CD8-positive, alpha-beta T cell (primary cell): ENCODE measurements at regions of chr7 and their contacts with region 1.

Region 1: DNA sequence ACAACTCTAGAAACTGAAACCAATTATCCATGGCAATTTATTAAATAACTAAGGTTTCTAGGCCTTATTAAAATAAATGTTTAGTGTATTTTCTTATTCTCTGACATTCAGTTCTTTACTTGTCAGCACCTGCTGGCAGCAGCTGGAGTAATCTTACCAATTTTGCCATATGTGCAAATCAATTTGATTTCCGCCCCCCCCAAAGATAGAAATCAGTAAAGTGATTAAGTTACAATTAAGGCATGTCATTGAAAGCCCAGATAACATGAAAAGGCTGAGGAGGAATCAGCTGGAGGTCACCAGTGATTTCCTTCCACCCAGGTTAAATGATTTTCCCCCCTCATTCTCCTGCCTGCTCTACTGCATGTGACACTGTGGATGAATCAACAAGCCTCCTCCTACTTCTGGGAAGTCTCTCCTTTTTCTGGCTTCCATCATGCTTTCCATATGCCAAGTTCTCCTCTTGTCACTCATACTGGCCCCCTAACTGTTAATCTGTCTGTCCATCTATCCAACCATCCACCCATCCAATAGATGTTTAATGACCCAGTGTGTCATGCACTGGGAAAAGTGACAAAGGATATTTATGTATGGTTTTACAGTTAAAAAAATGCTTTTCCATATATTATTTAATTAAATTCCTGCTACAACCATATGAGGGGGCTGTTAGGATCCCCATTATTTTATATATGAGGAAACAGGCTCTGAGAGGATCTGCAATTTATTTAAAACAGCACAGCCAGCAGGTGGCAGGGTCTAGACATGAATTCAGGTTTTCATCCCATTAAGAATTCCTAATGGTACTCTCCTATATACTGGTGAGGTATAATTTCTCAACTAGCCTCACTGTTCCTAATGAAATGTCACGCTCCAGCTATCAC is 116.5 kb downstream of the ATXN7L1 start:
- DNase-seq: peak in 4 of 9 experiments; percentile 23 to 59 (median 39)
- ATAC-seq: peak; percentile 25
- H3K4me3 ChIP-seq: no peak overlapping the region
- H3K4me3 Mint-ChIP-seq: no peak overlapping the region
- H3K27ac ChIP-seq: no peak overlapping the region
- H3K27ac Mint-ChIP-seq: peak overlapping the region; percentile 70
- H3K4me1 ChIP-seq: peaks cover 30% of the 10 kb centered on the region
- H3K4me1 Mint-ChIP-seq: peaks cover 43% of the 10 kb centered on the region
- H3K27me3 ChIP-seq: no peaks in the 10 kb centered on the region
- H3K27me3 Mint-ChIP-seq: no peaks in the 10 kb centered on the region
- CTCF ChIP-seq: peak; percentile 30

Region 2: DNA sequence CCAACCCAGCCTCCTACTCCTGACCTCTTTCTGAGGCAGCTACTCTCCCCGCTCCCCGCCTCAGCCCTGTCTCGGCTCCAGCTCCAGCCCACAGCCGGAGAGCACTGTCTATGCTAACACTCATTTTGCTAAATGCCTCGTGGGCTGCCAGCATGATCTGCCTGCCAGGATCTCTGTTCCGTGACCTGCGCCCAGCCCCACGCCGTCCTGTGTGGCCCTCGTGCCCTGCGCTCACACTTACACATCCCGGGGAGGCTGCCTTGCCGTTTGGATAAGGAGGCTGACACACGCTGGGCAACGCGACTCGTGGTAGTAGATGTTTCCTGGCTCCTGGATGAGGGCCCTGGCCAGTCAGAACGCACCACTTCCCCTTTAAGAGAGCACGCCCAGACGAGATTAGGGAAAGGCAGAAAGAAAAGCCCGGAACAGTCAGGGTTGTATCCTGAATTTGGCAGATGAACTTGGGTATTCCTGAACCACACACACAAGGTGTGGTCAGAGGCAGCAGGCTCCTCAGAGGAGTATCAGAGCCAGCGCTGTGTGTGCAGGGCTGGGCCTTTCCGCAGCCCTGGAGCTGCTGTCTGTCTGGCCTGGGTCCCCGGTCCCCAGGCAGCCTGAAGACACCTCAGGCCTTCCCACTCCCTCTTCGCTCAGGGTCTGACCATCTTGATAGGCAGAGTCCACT is 81.0 kb before region 1 on chr7:
- CTCF ChIA-PET with region 1: interaction called, 14 read pairs
- POLR2A ChIA-PET with region 1: interaction called, 3 read pairs
- intact Hi-C with region 1: loop called in 1 of 2 experiments (anchors 5 kb)
- DNase-seq: peak in 1 of 9 experiments; percentile 26
- ATAC-seq: no peak
- H3K4me3 ChIP-seq: no peak overlapping the region
- H3K4me3 Mint-ChIP-seq: peak overlapping the region; percentile 33
- H3K27ac ChIP-seq: peak overlapping the region in 1 of 2 experiments; percentile 80
- H3K27ac Mint-ChIP-seq: peak overlapping the region; percentile 84
- H3K4me1 ChIP-seq: peaks cover 39% of the 10 kb centered on the region
- H3K4me1 Mint-ChIP-seq: peaks cover 70% of the 10 kb centered on the region
- H3K27me3 ChIP-seq: no peaks in the 10 kb centered on the region
- H3K27me3 Mint-ChIP-seq: no peaks in the 10 kb centered on the region
- CTCF ChIP-seq: no peak

Region 3: DNA sequence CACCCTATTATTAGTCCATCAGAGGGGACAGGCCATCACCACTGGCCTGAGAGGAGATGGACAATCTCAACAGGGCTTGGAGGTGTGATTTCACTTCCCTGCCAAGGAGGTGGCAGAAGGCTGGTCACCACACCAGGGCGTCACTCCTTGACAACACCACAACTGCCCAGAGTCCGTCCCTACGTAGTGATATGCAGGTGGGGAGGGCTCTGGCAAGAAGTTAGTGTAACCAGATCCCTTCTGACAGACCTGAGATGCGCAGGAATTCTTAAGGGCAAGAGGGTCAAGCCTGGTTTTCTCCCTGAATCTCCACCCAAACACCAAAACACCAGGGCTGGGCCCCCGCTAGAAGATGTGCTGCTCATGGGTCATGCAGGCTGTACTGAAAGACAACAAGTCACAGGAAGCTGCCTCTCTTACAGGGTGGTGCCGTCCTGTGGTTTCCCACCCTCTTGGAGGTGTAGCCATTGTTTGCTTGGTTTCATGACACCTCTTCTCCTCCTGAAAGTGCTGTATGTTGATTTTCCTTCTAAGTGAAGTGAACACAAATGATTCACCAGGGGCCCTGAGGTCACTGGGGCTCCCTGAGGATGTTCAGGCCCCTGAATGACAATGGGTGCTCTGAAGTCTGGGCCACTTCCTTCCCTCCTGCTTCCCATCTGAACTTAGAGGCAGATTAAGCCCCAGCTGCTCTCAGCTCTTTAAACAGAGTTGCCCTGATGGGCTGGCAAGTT is 89.4 kb after region 1 on chr7:
- CTCF ChIA-PET with region 1: interaction called, 22 read pairs
- POLR2A ChIA-PET with region 1: interaction called, 9 read pairs
- intact Hi-C with region 1: loop called in 1 of 2 experiments (anchors 1 kb)
- DNase-seq: peak; percentile 30 to 91 (median 71)
- ATAC-seq: peak; percentile 86
- H3K4me3 ChIP-seq: peak overlapping the region in 1 of 2 experiments; percentile 18
- H3K4me3 Mint-ChIP-seq: peak overlapping the region; percentile 52
- H3K27ac ChIP-seq: peak overlapping the region; percentile 44 to 72
- H3K27ac Mint-ChIP-seq: peak overlapping the region; percentile 90
- H3K4me1 ChIP-seq: peaks cover 52% of the 10 kb centered on the region
- H3K4me1 Mint-ChIP-seq: peaks cover 74% of the 10 kb centered on the region
- H3K27me3 ChIP-seq: no peaks in the 10 kb centered on the region
- H3K27me3 Mint-ChIP-seq: no peaks in the 10 kb centered on the region
- CTCF ChIP-seq: no peak

Region 4: DNA sequence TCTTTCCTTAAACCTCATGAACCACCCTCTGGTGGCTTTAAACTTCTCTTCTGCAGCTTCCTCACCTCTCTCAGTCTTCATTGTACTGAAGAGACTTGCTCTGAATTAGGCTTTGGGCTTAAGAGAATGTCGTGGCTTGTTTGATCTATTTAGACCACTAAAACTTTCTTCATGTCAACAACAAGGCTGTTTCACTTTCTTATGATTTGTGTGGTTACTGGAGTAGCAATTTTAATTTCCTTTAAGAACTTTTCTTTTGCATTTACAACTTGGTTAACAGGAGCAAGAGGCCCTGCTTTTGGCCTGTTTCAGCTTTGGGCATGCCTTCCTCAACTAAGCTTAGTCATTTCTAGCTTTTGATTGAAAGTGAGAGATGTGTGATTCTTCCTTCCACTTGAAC is 165.0 kb after region 1 on chr7:
- CTCF ChIA-PET with region 1: interaction called, 14 read pairs
- POLR2A ChIA-PET with region 1: interaction called, 4 read pairs
- intact Hi-C with region 1: no loop called
- DNase-seq: peak in 3 of 9 experiments; percentile 16 to 73 (median 51)
- ATAC-seq: peak; percentile 86
- H3K4me3 ChIP-seq: no peak overlapping the region
- H3K4me3 Mint-ChIP-seq: peak overlapping the region; percentile 38
- H3K27ac ChIP-seq: peak overlapping the region in 1 of 2 experiments; percentile 40
- H3K27ac Mint-ChIP-seq: peak overlapping the region; percentile 78
- H3K4me1 ChIP-seq: peaks cover 21% of the 10 kb centered on the region
- H3K4me1 Mint-ChIP-seq: peaks cover 35% of the 10 kb centered on the region
- H3K27me3 ChIP-seq: no peaks in the 10 kb centered on the region
- H3K27me3 Mint-ChIP-seq: no peaks in the 10 kb centered on the region
- CTCF ChIP-seq: no peak

Region 5: GRCh38 chr7:106022193-106022821 is 262.4 kb after region 1 on chr7:
- CTCF ChIA-PET with region 1: interaction called, 11 read pairs
- POLR2A ChIA-PET with region 1: interaction called, 5 read pairs
- intact Hi-C with region 1: no loop called
- DNase-seq: peak; percentile 62 to 96 (median 84)
- ATAC-seq: peak; percentile 85
- H3K4me3 ChIP-seq: peak overlapping the region; percentile 11 to 20
- H3K4me3 Mint-ChIP-seq: peak overlapping the region; percentile 59
- H3K27ac ChIP-seq: peak overlapping the region; percentile 80 to 82
- H3K27ac Mint-ChIP-seq: peak overlapping the region; percentile 95
- H3K4me1 ChIP-seq: peaks cover 48% of the 10 kb centered on the region
- H3K4me1 Mint-ChIP-seq: peaks cover 68% of the 10 kb centered on the region
- H3K27me3 ChIP-seq: peaks cover 0 to 3% of the 10 kb centered on the region in 2 experiments
- H3K27me3 Mint-ChIP-seq: no peaks in the 10 kb centered on the region
- CTCF ChIP-seq: no peak

Region 6: GRCh38 chr7:106153891-106154449 is 394.1 kb after region 1 on chr7:
- CTCF ChIA-PET with region 1: no interaction called
- POLR2A ChIA-PET with region 1: no interaction called
- intact Hi-C with region 1: loop called in 1 of 2 experiments (anchors 5 kb)
- DNase-seq: peak; percentile 45 to 86 (median 72)
- ATAC-seq: peak; percentile 96
- H3K4me3 ChIP-seq: no peak overlapping the region
- H3K4me3 Mint-ChIP-seq: peak overlapping the region; percentile 48
- H3K27ac ChIP-seq: no peak overlapping the region
- H3K27ac Mint-ChIP-seq: no peak overlapping the region
- H3K4me1 ChIP-seq: no peaks in the 10 kb centered on the region
- H3K4me1 Mint-ChIP-seq: peaks cover 4% of the 10 kb centered on the region
- H3K27me3 ChIP-seq: no peaks in the 10 kb centered on the region
- H3K27me3 Mint-ChIP-seq: peaks cover 5% of the 10 kb centered on the region
- CTCF ChIP-seq: peak; percentile 93